ENCODE measurements at regions of chr11 and their contacts with region 1.

Region 1: GRCh38 chr11:34105079-34105956 is at the start of gene NAT10:
- DNase-seq: peak; percentile 99
- H3K4me3 ChIP-seq: peak within 1 kb of the TSS; percentile 88
- H3K27ac ChIP-seq: peak within 1 kb of the TSS; percentile 86
- H3K4me1 ChIP-seq: peaks cover 47% of the 10 kb centered on the region
- CTCF ChIP-seq: 0 out of 2 replicates have a peak, but pooled peaks have one; percentile 20
- total RNA-seq, gene NAT10: 62.5 and 64.9 TPM in 2 replicates

Region 2: GRCh38 chr11:33996498-33997454 is 108.5 kb before region 1 on chr11:
- CTCF ChIA-PET with region 1: no interaction called
- POLR2A ChIA-PET with region 1: no interaction called
- intact Hi-C with region 1: loop called (anchors 5 kb)
- DNase-seq: peak; percentile 82
- H3K4me3 ChIP-seq: no peak overlapping the region
- H3K27ac ChIP-seq: no peak overlapping the region
- H3K4me1 ChIP-seq: peaks cover 9% of the 10 kb centered on the region
- CTCF ChIP-seq: peak; percentile 90

Region 3: DNA sequence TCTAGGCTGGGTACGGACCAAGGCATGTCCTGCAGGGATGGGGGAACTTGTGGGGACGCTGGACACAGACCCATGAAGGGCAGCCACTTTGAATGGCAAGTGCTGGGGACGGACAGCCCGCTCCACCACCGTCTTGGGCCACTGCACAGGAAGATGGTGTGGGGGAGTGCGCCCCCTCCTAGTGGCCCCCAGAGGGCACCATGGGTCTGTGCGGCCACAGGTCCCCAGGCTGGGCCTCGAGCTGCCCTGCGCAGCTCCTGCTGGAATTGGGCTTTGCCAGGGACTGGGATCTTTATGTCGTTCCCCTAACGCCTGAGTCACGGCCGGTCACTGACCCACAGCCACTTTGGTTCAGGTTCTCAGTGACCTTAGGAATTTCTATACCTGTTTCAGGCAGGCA is 44.5 kb after region 1 on chr11:
- CTCF ChIA-PET with region 1: no interaction called
- POLR2A ChIA-PET with region 1: interaction called, 3 read pairs
- intact Hi-C with region 1: loop called (anchors 1 kb)
- DNase-seq: no peak
- H3K4me3 ChIP-seq: no peak overlapping the region
- H3K27ac ChIP-seq: no peak overlapping the region
- H3K4me1 ChIP-seq: peaks cover 51% of the 10 kb centered on the region
- CTCF ChIP-seq: peak; percentile 52

Measured in OCI-LY7 (cell line).